Right ventricle myocardium inferior (tissue), 1 donor: ENCODE measurements at regions of chr3 and their contacts with region 1.

Region 1: DNA sequence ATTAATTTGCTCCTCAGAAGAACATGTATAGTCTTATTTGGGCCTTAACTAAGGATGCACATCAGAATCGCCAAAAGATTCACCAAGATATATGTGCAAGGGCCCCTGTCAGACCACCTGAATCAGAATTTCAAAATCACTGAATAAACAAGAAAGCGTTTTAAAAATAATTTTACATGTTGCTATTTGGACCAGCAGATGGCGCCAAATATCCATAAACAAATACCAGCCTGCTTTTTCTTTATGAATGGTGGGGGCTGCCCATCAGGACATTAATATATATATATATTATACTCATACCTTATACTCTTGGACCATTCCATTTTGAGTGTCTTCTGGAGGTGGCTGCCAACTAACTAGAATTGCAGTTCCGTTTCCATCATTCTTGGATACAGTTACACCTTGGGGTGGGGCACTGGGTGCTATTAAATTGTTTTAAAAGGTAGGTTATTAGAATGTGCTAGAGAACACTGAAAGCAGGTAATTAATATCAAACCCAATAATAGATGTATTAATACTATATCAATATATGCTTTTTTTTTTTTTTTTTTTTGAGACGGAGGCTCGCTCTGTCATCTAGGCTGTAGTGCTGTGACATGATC is 1108.3 kb downstream of the ROBO1 start:
- DNase-seq: no peak
- ATAC-seq: no peak

Region 2: DNA sequence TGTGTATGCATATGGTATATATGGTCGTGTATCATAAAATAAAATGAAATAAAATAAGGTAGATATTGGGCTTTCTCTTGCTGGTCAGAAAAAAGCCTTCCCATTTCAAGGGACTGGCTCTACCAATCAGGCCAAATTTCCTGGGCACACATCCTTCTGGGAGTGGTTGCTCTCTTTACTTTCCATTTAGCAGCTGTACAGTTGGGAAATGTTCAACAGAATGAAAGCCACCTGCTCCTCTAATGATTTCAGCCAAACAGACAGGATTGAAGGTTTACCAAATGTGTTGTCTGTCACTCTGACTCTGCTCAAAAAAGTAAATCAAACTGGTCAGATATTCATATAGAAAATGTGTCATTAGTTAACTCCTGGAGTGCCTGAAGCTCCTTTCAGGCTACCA is 1239.2 kb before region 1 on chr3:
- intact Hi-C with region 1: no loop called
- DNase-seq: no peak
- ATAC-seq: no peak

Region 3: GRCh38 chr3:78427303-78427702 is 232.2 kb before region 1 on chr3:
- intact Hi-C with region 1: no loop called
- DNase-seq: no peak
- ATAC-seq: no peak

Region 4: DNA sequence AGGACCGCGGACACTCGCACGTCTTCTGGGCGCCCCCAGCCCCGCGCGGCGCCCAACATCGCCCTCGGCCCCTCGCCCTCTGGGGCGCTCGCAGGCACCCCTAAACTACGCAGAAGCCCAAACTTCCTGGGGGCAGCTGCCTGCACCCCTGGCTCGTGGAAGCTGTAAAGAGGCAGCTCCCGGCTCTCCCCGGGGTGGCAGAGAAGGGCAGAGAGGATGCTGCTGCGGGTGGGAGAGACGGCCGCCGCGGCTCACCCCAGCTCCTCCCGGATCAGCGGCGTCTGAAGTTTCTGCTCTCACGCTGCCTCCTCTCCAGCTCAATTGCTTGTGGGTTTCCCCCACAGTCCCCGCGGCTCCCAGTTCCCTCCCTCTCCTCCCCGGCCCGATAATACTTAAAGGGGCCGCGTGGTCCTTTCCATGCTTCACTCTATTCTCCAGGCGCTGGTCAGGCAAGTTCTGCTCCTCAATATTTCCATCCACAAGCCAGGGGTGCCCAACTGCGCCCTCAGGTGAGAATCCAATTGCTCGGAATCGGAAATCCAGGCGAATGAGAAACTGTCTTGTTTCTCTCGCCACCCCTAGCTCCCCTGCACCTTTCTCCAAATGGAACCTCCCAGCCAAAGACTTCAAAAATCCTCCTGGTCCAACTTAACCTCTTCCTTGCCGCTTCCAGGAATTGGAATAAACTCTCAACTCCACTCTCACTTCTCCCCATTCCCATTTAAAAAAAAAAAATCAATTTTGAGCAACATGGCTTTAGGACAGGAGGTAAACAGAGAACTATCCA is 359.8 kb after region 1 on chr3:
- intact Hi-C with region 1: loop called (anchors 5 kb)
- DNase-seq: peak; percentile 86
- ATAC-seq: peak; percentile 92

Region 5: GRCh38 chr3:79032686-79033318 is 373.3 kb after region 1 on chr3:
- intact Hi-C with region 1: loop called (anchors 2 kb)
- DNase-seq: no peak
- ATAC-seq: no peak

Region 6: GRCh38 chr3:79361748-79362378 is 702.4 kb after region 1 on chr3:
- intact Hi-C with region 1: loop called (anchors 5 kb)
- DNase-seq: no peak
- ATAC-seq: no peak

Region 7: DNA sequence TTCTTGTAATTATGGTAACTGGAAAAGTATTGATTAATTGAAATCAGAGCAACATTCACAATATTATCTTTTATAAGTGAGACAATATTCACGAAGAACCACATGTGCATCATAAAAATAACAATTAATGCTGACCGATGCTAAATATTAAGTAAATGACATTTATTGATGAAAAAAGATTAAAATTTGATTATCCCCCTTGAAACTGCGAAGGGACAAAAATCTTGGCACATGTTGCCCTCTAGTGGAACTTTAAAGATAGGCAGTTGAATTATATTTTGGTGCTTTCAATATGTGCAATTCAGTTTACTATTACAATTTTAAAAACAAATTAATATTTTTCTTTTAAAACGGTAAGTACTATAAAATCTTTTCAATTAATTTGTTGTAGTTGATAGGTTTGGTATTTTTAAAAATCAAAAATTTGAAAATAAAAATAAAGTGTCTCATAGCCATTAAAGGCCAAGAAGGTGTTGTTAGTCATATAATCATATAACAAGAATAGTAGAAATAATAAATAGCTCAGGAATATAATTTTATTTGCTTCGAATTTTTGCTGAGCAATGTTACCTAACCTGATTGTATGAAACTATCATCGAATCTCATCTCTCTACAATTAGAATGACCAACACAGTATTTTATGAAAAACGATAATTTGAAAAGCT is 838.1 kb after region 1 on chr3:
- intact Hi-C with region 1: loop called (anchors 5 kb)
- DNase-seq: no peak
- ATAC-seq: no peak